ENCODE measurements at regions of chr3 and their contacts with region 1.

Region 1: GRCh38 chr3:10115326-10116137 is at the start of gene BRK1:
- DNase-seq: peak; percentile 97
- total RNA-seq, gene BRK1: 82.6 TPM

Region 2: GRCh38 chr3:9731206-9732079 is 384.1 kb before region 1 on chr3 and contains the start of gene BRPF1:
- intact Hi-C with region 1: loop called (anchors 5 kb)
- DNase-seq: peak; percentile 100
- total RNA-seq, gene BRPF1: 10.6 TPM

Region 3: GRCh38 chr3:10008588-10009344 is 106.8 kb before region 1 on chr3:
- intact Hi-C with region 1: loop called (anchors 5 kb)
- DNase-seq: peak; percentile 97

Region 4: DNA sequence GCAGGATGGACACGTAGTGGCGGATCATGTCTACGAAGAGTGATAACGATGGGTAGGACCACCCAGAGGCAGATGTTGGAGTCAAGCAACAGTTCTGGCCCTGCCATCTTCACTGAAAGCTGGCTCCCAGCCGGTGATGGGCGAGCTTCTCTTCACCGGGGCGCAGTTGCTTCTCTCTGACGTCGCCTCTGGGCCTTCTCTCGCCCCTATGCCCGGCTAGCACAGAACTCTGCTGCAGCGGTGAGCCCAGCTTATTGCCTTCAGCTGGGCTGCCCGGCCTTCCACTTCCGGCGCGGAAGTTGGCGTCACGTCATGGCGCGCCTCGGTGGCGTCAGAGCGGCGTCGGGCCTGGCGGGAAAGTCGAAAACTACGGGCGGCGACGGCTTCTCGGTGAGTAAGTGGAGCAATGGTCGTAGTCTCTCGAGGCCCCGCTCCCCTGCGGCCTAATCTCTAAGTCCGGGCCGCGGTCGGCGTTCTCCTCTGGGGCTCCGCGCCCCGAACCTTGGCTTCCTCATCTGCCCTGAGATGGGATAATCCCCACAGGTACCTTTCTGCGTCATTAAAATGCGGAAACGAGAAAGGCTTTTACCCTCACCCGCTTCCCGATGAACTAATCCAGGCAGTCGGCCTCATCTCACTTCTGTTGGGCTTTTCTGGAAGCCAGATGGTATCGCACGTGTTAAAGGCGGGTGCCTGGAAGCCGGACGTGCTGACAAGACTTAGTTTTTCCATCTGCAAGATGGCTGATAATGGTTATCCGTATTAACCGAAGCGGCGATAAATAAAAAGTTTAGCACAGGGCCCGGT is 89.2 kb before region 1 on chr3 and contains the start of gene FANCD2:
- intact Hi-C with region 1: loop called (anchors 5 kb)
- DNase-seq: peak; percentile 97
- total RNA-seq, gene FANCD2: 0.48 TPM

Region 5: DNA sequence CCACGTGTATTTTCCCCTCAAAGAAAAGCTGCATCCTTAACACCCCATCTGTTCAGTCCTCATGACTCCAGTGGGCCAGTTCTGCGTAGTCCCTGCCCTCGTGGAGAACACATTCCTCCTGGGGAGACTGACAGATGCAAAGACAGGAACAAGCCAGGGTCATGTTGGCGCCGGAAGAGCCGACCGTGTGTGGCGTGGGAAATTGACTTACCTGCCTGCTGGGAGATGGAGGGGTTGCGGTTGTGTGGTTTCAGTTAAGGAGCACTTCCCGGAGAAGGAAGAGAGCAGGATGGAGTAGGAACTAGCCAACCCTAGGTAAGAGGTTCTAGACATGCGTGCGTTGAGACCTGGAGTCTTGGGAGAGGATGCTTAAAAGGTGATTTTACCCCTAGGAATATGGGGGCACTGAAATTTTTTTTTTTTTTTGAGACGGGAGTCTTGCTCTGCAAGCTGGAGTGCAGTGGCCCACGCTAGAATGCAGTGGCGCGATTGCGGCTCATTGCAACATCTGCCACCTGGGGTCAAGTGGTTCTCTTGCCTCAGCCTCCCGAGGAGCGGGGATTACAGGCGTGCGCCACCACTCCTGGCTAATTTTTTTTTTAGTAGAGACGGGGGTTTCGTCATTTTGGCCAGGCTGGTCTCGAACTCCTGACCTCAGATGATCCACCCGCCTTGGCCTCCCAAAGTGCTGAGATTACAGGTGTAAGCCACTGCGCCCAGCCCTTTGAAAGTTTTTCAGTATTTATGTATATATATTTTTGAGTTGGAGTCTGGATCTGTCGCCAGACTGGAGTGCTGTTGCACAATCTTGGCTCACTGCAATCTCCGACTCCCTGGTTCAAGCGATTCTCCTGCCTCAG is 27.4 kb after region 1 on chr3:
- intact Hi-C with region 1: loop called (anchors 2 kb)
- DNase-seq: no peak

Region 6: GRCh38 chr3:10485380-10485779 is 369.8 kb after region 1 on chr3:
- intact Hi-C with region 1: no loop called
- DNase-seq: no peak